CD8-positive, alpha-beta T cell (primary cell): ENCODE measurements at regions of chr7 and their contacts with region 1.

Region 1: DNA sequence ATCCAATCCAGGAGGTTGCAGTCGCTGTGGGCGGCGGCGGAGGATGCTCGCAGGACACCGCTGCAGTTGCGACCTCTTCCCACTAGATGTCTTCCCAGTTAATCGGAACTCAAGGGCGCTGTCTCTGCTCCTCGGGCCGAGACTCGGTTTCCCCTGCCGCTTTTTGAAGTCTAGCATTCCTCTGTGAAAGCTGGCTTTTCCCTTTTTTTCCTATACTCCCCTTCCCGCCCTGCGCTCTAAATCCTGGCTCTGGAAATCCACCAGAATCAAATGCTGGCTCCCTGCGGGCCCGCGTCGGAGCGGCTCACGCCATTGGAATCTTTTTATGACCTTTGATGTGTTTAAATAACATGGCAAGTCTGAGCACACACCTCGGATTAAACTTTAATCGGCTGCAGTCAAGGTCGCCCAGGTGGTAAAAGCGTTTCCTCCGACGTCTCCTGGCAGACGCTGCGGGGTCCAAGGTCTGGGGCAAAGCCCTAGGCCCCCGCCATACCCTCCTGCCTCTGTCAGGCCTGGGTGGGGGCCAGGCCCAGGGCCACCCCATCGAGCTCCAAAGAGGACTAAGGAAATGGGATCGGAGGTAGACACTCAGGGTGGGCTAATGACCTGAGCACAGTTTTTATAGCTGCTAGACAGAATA is 10.7 kb upstream of the HOXA13 start:
- DNase-seq: peak in 5 of 9 experiments; percentile 42 to 58 (median 54)
- ATAC-seq: peak; percentile 72
- H3K4me3 ChIP-seq: no peak overlapping the region
- H3K4me3 Mint-ChIP-seq: peak overlapping the region; percentile 71
- H3K27ac ChIP-seq: no peak overlapping the region
- H3K27ac Mint-ChIP-seq: no peak overlapping the region
- H3K4me1 ChIP-seq: peaks cover 13% of the 10 kb centered on the region
- H3K4me1 Mint-ChIP-seq: peaks cover 15% of the 10 kb centered on the region
- H3K27me3 ChIP-seq: peaks cover 41 to 56% of the 10 kb centered on the region in 2 experiments
- H3K27me3 Mint-ChIP-seq: peaks cover 86% of the 10 kb centered on the region
- CTCF ChIP-seq: peak; percentile 71

Region 2: DNA sequence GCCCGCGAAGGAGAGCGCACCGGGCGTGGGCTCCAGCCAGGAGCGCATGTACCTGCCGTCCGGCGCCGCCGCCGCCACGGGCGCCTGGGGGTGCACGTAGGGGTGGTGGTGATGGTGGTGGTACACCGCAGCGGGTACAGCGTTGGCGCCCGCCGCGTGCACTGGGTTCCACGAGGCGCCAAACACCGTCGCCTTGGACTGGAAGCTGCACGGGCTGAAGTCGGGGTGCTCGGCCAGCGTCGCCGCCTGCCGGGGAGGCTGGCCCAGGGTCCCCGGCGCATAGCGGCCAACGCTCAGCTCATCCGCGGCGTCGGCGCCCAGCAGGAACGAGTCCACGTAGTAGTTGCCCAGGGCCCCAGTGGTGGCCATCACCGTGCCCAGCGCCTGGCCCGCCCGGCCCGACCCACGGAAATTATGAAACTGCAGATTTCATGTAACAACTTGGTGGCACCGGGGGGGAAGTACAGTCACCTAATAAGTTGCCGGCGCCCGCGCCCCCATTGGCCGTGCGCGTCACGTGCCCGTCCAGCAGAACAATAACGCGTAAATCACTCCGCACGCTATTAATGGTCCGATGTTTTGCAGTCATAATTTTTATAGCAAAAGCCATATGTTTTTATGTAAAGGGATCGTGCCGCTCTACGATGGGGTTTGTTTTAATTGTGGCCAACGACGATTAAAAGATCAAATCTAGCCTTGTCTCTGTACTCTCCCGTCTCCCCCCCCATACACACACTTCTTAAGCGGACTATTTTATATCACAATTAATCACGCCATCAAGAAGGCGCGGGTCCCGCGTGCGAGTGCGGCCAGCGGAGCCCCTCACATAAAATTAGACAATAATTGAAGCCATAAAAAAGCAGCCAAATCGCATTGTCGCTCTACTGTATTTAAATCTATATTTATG is 45.2 kb before region 1 on chr7 and contains the start of gene HOXA9:
- CTCF ChIA-PET with region 1: no interaction called
- POLR2A ChIA-PET with region 1: no interaction called
- intact Hi-C with region 1: no loop called
- DNase-seq: peak in 2 of 9 experiments; percentile 49 to 56
- ATAC-seq: no peak
- H3K4me3 ChIP-seq: peak within 1 kb of the TSS in 1 of 2 experiments; percentile 12
- H3K4me3 Mint-ChIP-seq: peak within 1 kb of the TSS; percentile 43
- H3K27ac ChIP-seq: no peak within 1 kb of the TSS
- H3K27ac Mint-ChIP-seq: no peak within 1 kb of the TSS
- H3K4me1 ChIP-seq: peaks cover 32% of the 10 kb centered on the region
- H3K4me1 Mint-ChIP-seq: peaks cover 37% of the 10 kb centered on the region
- H3K27me3 ChIP-seq: peaks cover 67 to 75% of the 10 kb centered on the region in 2 experiments
- H3K27me3 Mint-ChIP-seq: peaks cover 75% of the 10 kb centered on the region
- CTCF ChIP-seq: no peak
- total RNA-seq, gene HOXA9: not detected

Region 3: DNA sequence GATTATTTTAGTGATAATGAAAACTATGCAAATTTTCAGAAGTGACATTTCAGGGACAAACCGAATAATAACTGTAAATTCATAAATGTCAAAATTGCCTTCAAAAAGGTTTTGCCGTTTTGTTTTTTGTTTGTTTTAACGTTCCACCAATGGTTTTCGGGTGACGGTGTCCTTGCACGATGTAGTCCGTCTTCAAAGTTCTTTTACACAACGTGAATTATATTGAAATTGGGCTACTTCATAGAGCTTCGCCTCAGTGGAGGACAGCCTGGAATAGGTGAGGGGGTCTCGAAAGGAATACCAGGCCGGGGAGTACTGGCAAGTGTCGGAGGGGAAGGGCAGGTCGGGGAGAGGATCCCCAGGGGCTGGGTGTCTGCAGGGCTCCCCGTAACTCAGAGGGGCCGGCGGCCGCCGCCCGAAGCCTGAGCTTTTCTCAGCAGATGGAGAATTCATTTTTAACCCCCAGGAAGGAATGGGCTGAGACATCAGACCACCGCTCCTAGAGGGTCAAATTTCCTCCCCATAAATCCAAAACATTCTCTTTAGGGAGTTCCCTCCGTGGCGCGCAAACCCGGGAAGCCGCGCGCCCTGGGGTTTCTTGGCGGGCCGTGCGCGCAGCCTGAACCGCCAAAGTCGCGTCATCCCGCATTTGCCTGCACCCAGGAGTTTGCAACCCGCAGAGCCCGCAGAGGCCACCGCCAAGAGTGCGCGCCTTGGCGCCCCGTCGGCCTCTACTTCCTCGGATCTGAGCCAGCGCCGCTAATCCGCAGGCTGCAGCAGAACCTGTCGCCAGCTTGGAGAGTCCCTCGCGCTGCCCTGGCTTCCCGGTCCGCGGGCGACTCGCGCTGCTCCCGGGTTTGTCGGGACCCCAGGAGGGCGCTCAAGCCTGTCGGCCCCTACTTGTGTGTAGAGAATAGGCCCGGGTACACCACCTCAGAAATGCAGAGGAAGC is 14.7 kb after region 1 on chr7:
- CTCF ChIA-PET with region 1: interaction called, 11 read pairs
- POLR2A ChIA-PET with region 1: no interaction called
- intact Hi-C with region 1: no loop called
- DNase-seq: no peak
- ATAC-seq: no peak
- H3K4me3 ChIP-seq: no peak overlapping the region
- H3K4me3 Mint-ChIP-seq: no peak overlapping the region
- H3K27ac ChIP-seq: no peak overlapping the region
- H3K27ac Mint-ChIP-seq: no peak overlapping the region
- H3K4me1 ChIP-seq: no peaks in the 10 kb centered on the region
- H3K4me1 Mint-ChIP-seq: peaks cover 5% of the 10 kb centered on the region
- H3K27me3 ChIP-seq: peaks cover 3 to 12% of the 10 kb centered on the region in 2 experiments
- H3K27me3 Mint-ChIP-seq: peaks cover 62% of the 10 kb centered on the region
- CTCF ChIP-seq: no peak

Region 4: GRCh38 chr7:27576360-27576944 is 365.9 kb after region 1 on chr7:
- CTCF ChIA-PET with region 1: no interaction called
- POLR2A ChIA-PET with region 1: no interaction called
- intact Hi-C with region 1: loop called in 1 of 2 experiments (anchors 5 kb)
- DNase-seq: peak in 2 of 9 experiments; percentile 30 to 47
- ATAC-seq: no peak
- H3K4me3 ChIP-seq: no peak overlapping the region
- H3K4me3 Mint-ChIP-seq: no peak overlapping the region
- H3K27ac ChIP-seq: no peak overlapping the region
- H3K27ac Mint-ChIP-seq: no peak overlapping the region
- H3K4me1 ChIP-seq: no peaks in the 10 kb centered on the region
- H3K4me1 Mint-ChIP-seq: no peaks in the 10 kb centered on the region
- H3K27me3 ChIP-seq: no peaks in the 10 kb centered on the region
- H3K27me3 Mint-ChIP-seq: no peaks in the 10 kb centered on the region
- CTCF ChIP-seq: peak; percentile 69

Region 5: GRCh38 chr7:27774717-27775328 is 564.3 kb after region 1 on chr7:
- CTCF ChIA-PET with region 1: interaction called, 12 read pairs
- POLR2A ChIA-PET with region 1: no interaction called
- intact Hi-C with region 1: no loop called
- DNase-seq: peak in 2 of 9 experiments; percentile 24 to 47
- ATAC-seq: no peak
- H3K4me3 ChIP-seq: no peak overlapping the region
- H3K4me3 Mint-ChIP-seq: no peak overlapping the region
- H3K27ac ChIP-seq: no peak overlapping the region
- H3K27ac Mint-ChIP-seq: no peak overlapping the region
- H3K4me1 ChIP-seq: no peaks in the 10 kb centered on the region
- H3K4me1 Mint-ChIP-seq: peaks cover 55% of the 10 kb centered on the region
- H3K27me3 ChIP-seq: no peaks in the 10 kb centered on the region
- H3K27me3 Mint-ChIP-seq: no peaks in the 10 kb centered on the region
- CTCF ChIP-seq: peak; percentile 48

Region 6: DNA sequence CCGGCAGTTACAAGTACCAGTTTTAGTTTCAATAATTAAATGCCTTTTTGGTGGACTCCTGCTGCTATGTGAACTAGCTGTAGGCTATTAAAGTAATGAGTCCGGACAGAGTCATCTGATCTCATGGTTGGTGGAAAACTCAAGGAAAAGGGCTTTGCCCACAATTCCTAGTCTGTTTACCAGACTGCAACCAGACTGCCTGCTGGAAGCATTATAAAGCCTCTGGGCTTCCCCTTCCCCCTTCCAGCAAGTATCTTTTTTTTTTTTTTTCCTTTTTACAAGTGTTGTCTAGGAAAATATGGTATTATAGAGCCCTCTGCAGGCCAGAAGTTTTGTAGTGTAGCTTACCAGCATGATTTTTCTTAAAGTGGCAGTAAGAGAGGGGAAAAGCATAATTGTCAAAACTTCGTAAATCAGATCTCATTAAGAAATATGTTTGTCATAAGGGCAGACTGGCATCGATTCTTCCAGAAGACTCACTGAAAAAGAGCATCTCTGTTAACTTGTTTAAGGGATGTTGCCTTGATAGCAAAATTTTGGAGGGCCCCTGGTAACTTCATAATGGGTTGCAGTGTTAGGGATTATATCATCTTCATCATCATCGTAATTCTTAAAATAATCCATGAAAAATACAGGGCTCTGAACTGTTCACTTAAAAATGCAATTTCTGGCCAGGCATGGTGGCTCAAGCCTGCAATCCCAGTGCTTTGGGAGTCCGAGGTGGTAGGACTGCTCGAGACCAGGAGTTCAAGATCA is 710.7 kb after region 1 on chr7:
- CTCF ChIA-PET with region 1: interaction called, 13 read pairs
- POLR2A ChIA-PET with region 1: no interaction called
- intact Hi-C with region 1: no loop called
- DNase-seq: peak in 2 of 9 experiments; percentile 48 to 63
- ATAC-seq: no peak
- H3K4me3 ChIP-seq: no peak overlapping the region
- H3K4me3 Mint-ChIP-seq: no peak overlapping the region
- H3K27ac ChIP-seq: no peak overlapping the region
- H3K27ac Mint-ChIP-seq: no peak overlapping the region
- H3K4me1 ChIP-seq: no peaks in the 10 kb centered on the region
- H3K4me1 Mint-ChIP-seq: no peaks in the 10 kb centered on the region
- H3K27me3 ChIP-seq: no peaks in the 10 kb centered on the region
- H3K27me3 Mint-ChIP-seq: no peaks in the 10 kb centered on the region
- CTCF ChIP-seq: peak; percentile 25

Region 7: GRCh38 chr7:27936047-27936767 is 725.6 kb after region 1 on chr7:
- CTCF ChIA-PET with region 1: interaction called, 5 read pairs
- POLR2A ChIA-PET with region 1: no interaction called
- intact Hi-C with region 1: loop called in 1 of 2 experiments (anchors 5 kb)
- DNase-seq: no peak
- ATAC-seq: no peak
- H3K4me3 ChIP-seq: no peak overlapping the region
- H3K4me3 Mint-ChIP-seq: no peak overlapping the region
- H3K27ac ChIP-seq: no peak overlapping the region
- H3K27ac Mint-ChIP-seq: no peak overlapping the region
- H3K4me1 ChIP-seq: no peaks in the 10 kb centered on the region
- H3K4me1 Mint-ChIP-seq: no peaks in the 10 kb centered on the region
- H3K27me3 ChIP-seq: no peaks in the 10 kb centered on the region
- H3K27me3 Mint-ChIP-seq: peaks cover 2% of the 10 kb centered on the region
- CTCF ChIP-seq: no peak

Region 8: DNA sequence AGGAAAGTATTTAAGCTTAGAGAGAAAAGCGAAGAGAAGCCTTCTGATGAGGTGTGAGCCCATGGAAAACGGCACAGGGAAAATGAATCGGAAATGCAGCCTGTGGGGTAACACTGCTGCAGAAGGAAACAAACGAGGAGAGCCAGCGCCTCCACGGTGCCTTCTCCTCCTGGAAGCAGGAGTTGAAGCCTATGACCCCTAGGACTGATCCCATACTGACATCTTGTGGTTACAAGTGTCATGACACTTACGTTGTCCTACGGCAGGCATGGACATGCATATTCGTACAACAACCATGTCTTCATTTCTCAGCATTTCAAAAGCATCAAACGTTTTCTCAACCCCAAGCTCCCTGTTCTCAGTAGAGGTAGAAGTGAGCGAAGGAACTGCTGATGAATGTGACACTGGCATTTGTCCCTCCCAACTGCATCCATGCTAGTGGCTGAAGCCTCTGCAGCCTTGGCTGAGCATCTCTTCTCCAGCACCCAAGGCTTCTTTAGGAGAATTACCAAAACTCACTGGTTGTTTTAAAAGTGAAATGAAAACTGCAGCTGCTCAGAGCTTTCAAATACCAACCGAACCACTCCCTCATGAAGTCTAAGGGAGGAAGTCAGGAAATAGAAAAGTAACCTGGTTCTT is 809.9 kb after region 1 on chr7:
- CTCF ChIA-PET with region 1: interaction called, 17 read pairs
- POLR2A ChIA-PET with region 1: no interaction called
- intact Hi-C with region 1: loop called in 1 of 2 experiments (anchors 5 kb)
- DNase-seq: peak in 6 of 9 experiments; percentile 10 to 71 (median 44)
- ATAC-seq: peak; percentile 73
- H3K4me3 ChIP-seq: no peak overlapping the region
- H3K4me3 Mint-ChIP-seq: no peak overlapping the region
- H3K27ac ChIP-seq: no peak overlapping the region
- H3K27ac Mint-ChIP-seq: no peak overlapping the region
- H3K4me1 ChIP-seq: no peaks in the 10 kb centered on the region
- H3K4me1 Mint-ChIP-seq: peaks cover 4% of the 10 kb centered on the region
- H3K27me3 ChIP-seq: no peaks in the 10 kb centered on the region
- H3K27me3 Mint-ChIP-seq: no peaks in the 10 kb centered on the region
- CTCF ChIP-seq: peak; percentile 69